ENCODE measurements at regions of chr17 and their contacts with region 1.

Region 1: DNA sequence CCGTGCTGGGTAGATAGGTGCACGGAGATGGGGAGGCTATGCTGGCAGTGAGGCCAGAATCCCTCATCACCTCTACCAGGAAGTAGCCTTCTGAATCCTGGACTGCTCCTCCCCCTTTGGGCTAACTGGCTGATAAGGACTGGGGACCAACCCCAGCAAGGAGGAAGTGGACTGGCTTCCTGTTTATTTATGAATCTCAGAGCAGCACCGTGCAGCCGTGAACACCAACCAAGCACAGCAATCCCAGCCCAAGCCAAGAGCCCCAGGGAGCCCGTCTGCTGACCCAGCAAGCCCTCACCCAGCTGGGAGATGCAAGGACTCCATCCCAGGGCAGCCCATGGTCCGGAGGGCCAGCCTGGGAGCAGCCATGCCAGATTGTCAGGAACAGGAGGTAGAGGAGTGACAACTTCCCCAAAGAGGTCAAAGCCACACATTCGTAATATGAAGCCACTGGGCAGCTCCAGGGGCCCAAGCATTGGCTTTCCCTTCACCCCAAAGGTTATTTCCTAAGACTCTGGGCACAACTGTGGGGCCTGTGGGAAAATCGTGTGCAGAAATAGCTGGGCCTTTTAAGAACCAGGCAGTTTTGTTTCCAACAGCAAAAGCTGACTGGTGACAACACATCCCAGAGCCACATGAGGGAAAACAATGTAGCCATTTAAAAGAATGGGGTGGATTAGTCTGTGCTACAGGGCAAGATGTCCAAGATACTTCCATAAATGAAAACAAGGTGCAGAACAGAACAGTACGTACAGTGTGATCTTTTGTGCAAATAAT is 23.9 kb downstream of the PHB1 start:
- DNase-seq: no peak
- ATAC-seq: peak; percentile 39 to 76 (median 57)
- H3K4me3 ChIP-seq: peak overlapping the region in 2 of 10 donors; percentile 2 to 38
- H3K27ac ChIP-seq: peak overlapping the region in 5 of 10 donors; percentile 12 to 90 (median 58)
- H3K4me1 ChIP-seq: peaks cover 0 to 75% (median 8%) of the 10 kb centered on the region in 9 donors
- H3K27me3 ChIP-seq: no peaks in the 10 kb centered on the region
- CTCF ChIP-seq: no peak

Region 2: GRCh38 chr17:48215583-48216139 is 1175.1 kb before region 1 on chr17:
- intact Hi-C with region 1: loop called in 1 of 10 experiments (anchors 5 kb)
- DNase-seq: no peak
- ATAC-seq: no peak
- H3K4me3 ChIP-seq: no peak overlapping the region
- H3K27ac ChIP-seq: no peak overlapping the region
- H3K4me1 ChIP-seq: no peaks in the 10 kb centered on the region
- H3K27me3 ChIP-seq: peaks cover 0 to 80% (median 40%) of the 10 kb centered on the region in 7 donors
- CTCF ChIP-seq: peak in 7 of 9 donors; percentile 43 to 66 (median 49)

Region 3: GRCh38 chr17:49170216-49170615 is 220.5 kb before region 1 on chr17:
- intact Hi-C with region 1: loop called in 1 of 10 experiments (anchors 10 kb)
- DNase-seq: no peak
- ATAC-seq: no peak
- H3K4me3 ChIP-seq: no peak overlapping the region
- H3K27ac ChIP-seq: no peak overlapping the region
- H3K4me1 ChIP-seq: no peaks in the 10 kb centered on the region
- H3K27me3 ChIP-seq: peaks cover 0 to 70% (median 53%) of the 10 kb centered on the region in 7 donors
- CTCF ChIP-seq: no peak

Region 4: DNA sequence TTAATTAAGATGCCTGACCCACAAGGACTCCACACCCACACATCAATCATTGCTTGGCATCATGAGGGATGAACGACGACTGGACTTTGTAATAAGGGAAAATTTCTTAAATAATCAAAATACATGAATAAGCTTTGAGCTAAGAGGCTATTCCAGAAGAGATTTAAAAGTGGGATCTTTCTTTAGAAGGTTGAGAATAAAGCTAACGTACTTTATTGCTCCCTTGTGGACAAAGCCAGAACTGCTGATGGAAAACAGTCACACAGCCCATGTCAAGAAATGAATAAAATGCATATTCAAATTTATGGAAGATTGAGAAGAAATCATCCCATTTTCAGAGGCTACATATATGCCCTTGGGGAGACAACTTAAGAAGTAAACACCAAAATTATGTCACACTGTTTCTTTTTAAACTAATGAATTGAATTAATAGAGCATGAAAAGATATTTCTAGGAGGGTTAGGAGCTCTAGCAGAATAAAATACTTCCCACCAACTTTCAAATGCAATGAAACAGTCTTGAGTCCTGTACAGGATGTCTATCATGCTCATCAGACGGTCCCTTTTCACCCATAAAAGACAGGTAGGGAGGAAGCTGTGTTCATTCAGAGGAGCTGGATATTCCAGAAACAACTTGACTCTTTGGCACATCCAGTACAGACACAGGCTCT is 99.9 kb before region 1 on chr17:
- intact Hi-C with region 1: no loop called
- DNase-seq: peak in 1 of 2 donors; percentile 17
- ATAC-seq: peak in 1 of 8 donors; percentile 30
- H3K4me3 ChIP-seq: no peak overlapping the region
- H3K27ac ChIP-seq: no peak overlapping the region
- H3K4me1 ChIP-seq: no peaks in the 10 kb centered on the region
- H3K27me3 ChIP-seq: no peaks in the 10 kb centered on the region
- CTCF ChIP-seq: peak; percentile 53 to 82 (median 75)

Region 5: DNA sequence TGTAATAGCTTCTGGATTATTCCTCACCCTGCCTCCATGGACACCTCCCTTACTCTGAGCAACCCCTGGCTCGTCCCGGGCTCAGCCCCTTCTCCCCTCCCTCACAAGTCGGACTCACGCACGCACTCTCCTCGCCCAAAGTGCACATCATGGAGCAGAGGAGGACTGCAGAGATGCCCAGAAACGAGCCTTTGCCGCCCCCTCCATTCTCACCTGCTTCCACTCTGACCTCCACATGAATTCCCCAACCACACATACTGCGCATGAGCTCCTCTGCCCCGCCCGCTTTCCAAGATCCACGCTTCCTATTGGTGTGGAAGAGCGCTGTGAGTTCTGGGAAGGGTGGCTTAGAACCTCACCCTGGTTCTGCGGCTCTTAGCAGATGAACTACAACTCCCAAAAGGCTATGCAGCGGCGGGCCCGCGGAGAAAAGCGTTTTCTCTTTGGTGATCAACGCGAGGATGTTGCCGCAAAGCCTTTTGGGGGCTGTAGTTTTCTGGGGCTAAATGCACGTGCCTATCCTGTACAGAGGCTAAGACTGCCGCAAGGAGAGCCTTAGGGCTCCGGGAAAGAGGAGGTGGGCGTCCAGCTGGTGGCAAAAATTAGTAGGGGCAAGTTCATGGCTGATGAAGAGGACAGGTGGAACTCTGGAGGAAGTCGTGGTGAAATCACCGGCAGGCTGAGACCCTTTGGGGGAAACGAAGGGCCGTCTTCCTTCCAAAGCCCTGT is 24.1 kb after region 1 on chr17 and contains the start of gene PHB1:
- intact Hi-C with region 1: no loop called
- DNase-seq: peak; percentile 92 to 98
- ATAC-seq: peak; percentile 100
- H3K4me3 ChIP-seq: peak within 1 kb of the TSS; percentile 48 to 97 (median 82)
- H3K27ac ChIP-seq: peak within 1 kb of the TSS in 9 of 10 donors; percentile 43 to 81 (median 71)
- H3K4me1 ChIP-seq: peaks cover 5 to 26% (median 16%) of the 10 kb centered on the region in 9 donors
- H3K27me3 ChIP-seq: peaks cover 0 to 3% (median 0%) of the 10 kb centered on the region in 7 donors
- CTCF ChIP-seq: no peak
- total RNA-seq, gene PHB1: 187 to 249 (median 215) TPM

Measured in heart right ventricle (tissue), 16 donors.